A549 (cell line): ENCODE measurements at regions of chr3 and their contacts with region 1.

Region 1: GRCh38 chr3:140128631-140129030 is 193.6 kb downstream of the CLSTN2 start:
- DNase-seq: peak; percentile 10 to 25
- ATAC-seq: peak; percentile 82 to 86; a peak in 5 of 6 replicates
- H3K4me3 ChIP-seq: no peak overlapping the region
- H3K27ac ChIP-seq: no peak overlapping the region
- H3K4me1 ChIP-seq: no peaks in the 10 kb centered on the region
- CTCF ChIP-seq: peak; percentile 32; the same call in 1 of the 3 replicates
- EP300 ChIP-seq: no peak
- POLR2A ChIP-seq: no peak
- RAD21 ChIP-seq: peak; percentile 22 to 40; a peak in 4 of 5 replicates

Region 2: DNA sequence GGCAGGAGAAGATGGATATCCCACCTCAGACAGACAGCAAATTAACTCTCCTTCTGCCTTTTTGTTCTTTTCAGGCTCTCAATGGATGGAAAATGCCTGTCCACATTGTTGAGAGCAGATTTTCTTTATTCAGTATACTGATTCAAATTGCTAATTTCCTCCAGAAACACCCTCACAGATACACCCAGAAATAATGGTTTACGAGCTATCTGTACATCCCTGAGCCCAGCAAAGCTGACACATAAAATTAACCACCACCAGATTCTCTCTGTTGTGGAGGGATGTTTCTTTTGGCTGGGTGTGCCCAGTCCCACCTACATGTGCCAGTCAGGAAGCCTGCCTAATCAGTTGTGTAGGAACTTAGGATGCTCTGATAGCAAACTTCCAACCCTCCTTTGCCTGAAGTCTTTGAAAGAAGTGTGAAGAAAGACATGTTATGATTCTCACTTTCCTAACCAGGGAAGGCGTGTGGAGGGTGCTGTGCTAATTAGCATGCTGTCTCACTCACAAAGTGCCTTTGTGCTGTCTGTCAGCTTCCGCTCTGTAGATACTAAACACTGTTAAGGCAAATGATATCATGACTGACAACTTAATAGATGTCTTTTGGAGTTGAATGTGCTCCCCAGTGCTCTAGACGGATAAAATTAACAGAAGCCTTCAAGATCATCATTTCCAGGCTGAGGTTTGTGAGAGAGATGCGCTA is 14.9 kb after region 1 on chr3:
- CTCF ChIA-PET with region 1: interaction called, 13 read pairs
- POLR2A ChIA-PET with region 1: no interaction called
- DNase-seq: no peak
- ATAC-seq: no peak
- H3K4me3 ChIP-seq: no peak overlapping the region
- H3K27ac ChIP-seq: no peak overlapping the region
- H3K4me1 ChIP-seq: no peaks in the 10 kb centered on the region
- CTCF ChIP-seq: no peak
- EP300 ChIP-seq: no peak
- POLR2A ChIP-seq: no peak
- RAD21 ChIP-seq: no peak

Region 3: GRCh38 chr3:140186421-140186920 is 57.8 kb after region 1 on chr3:
- CTCF ChIA-PET with region 1: no interaction called
- POLR2A ChIA-PET with region 1: no interaction called
- DNase-seq: no peak
- ATAC-seq: no peak
- H3K4me3 ChIP-seq: no peak overlapping the region
- H3K27ac ChIP-seq: no peak overlapping the region
- H3K4me1 ChIP-seq: no peaks in the 10 kb centered on the region
- CTCF ChIP-seq: no peak
- EP300 ChIP-seq: no peak
- POLR2A ChIP-seq: no peak
- RAD21 ChIP-seq: no peak